Dorsolateral prefrontal cortex (tissue), 120 donors: ENCODE measurements at regions of chr3 and their contacts with region 1.

Region 1: GRCh38 chr3:12004741-12005513 is 739 bp downstream of the SYN2 start:
- DNase-seq: no peak
- H3K4me3 ChIP-seq: peak overlapping the region; percentile 29 to 76 (median 60)
- H3K27ac ChIP-seq: peak overlapping the region in 31 of 59 donors; percentile 12 to 83 (median 57)
- H3K27me3 ChIP-seq: peaks cover 0 to 35% (median 4%) of the 10 kb centered on the region in 45 donors
- CTCF ChIP-seq: no peak

Region 2: GRCh38 chr3:11705049-11705448 is 299.9 kb before region 1 on chr3:
- intact Hi-C with region 1: no loop called
- DNase-seq: peak in 6 of 10 donors; percentile 51 to 71 (median 55)
- H3K4me3 ChIP-seq: peak overlapping the region in 36 of 59 donors; percentile 2 to 46 (median 24)
- H3K27ac ChIP-seq: peak overlapping the region in 22 of 59 donors; percentile 2 to 71 (median 33)
- H3K27me3 ChIP-seq: no peaks in the 10 kb centered on the region
- CTCF ChIP-seq: no peak

Region 3: DNA sequence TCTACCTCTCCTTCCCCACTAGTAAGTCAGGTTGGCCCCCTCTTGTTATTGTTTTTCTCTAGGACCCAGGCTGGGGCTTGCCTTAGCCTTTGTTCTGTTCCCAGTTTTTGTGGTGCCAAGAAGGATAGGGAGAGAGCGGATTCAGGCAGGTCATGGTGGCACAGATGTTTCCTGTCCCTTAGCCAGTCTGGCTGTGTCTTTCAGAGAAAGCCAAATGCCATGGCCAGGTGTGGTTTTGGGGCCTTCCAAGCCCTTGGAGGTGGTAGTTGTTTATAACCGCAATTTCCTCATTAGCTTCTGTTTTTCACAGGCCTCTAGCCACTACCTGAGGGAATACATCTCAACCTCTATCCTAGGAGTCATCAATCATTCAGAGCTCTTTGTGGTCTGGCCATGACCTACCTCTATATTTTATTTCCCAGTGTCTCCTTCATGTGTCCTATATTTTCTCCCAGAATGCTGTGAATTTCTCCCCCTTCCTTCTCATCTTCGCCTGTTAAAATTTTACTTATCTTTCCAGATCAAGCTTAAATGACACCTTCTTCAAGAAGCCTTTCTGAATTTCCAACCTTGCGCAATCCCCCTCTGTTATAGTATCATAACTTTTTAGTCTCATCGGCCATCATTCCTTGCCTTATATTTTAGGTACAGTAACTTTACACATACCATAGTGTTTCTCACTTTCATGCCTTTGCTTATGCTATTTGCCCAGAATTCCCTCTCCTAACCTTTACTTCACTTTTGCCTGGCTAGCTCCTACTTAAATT is 115.6 kb after region 1 on chr3:
- intact Hi-C with region 1: loop called in 1 of 2 experiments (anchors 10 kb)
- DNase-seq: no peak
- H3K4me3 ChIP-seq: no peak overlapping the region
- H3K27ac ChIP-seq: peak overlapping the region in 1 of 59 donors; percentile 30
- H3K27me3 ChIP-seq: peaks cover 0 to 4% (median 0%) of the 10 kb centered on the region in 45 donors
- CTCF ChIP-seq: no peak